ENCODE measurements at regions of chr3 and their contacts with region 1.

Region 1: DNA sequence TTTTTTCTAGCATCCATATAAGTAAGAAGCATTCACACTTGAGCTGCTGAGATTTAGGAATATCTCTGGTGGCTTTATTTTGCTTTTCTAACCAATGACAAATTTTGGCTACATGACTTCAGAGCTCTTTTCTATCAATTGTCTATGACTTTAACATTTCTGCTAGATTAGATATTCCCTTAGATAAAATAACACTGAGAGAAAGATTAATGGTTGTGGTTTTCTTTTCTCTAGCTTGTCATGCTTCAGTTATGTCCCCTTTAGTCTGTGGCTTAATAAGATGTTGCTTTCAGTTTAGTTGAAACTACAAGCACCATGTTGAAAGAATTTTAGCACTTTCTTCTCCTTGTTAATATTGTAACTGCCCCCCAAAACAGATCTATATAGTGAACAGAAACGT is 665.6 kb upstream of the CCDC54 start:
- DNase-seq: peak; percentile 31
- H3K4me3 ChIP-seq: no peak overlapping the region
- H3K27me3 ChIP-seq: no peaks in the 10 kb centered on the region
- CTCF ChIP-seq: no peak

Region 2: DNA sequence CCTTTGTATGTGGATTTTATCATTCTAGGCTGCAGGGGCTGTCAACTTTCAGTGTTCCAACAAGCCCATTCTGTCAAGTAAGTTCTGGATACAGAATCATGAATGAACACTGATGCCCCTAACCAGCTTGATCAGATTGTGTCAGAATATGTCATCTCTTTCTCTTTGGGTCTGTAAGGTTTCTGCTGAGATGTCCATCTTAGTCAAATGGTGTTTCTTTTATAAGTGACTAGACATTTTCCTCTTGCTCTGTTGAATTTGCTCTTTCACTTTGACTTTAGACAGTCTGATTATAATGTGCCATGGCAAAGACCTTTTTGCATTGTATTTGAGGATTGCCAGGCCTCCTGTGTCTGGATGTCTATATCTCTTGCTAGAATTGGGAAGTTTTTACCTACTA is 181.9 kb before region 1 on chr3:
- CTCF ChIA-PET with region 1: no interaction called
- POLR2A ChIA-PET with region 1: no interaction called
- DNase-seq: no peak
- H3K4me3 ChIP-seq: no peak overlapping the region
- H3K27me3 ChIP-seq: no peaks in the 10 kb centered on the region
- CTCF ChIP-seq: no peak

Region 3: GRCh38 chr3:106728315-106729098 is 16.9 kb after region 1 on chr3:
- CTCF ChIA-PET with region 1: no interaction called
- POLR2A ChIA-PET with region 1: interaction called, 10 read pairs
- DNase-seq: peak; percentile 94
- H3K4me3 ChIP-seq: peak overlapping the region; percentile 28
- H3K27me3 ChIP-seq: no peaks in the 10 kb centered on the region
- CTCF ChIP-seq: no peak

Measured in BJ (cell line).